ENCODE measurements at regions of chr17 and their contacts with region 1.

Region 1: GRCh38 chr17:75182569-75183450 is at the start of gene SUMO2:
- DNase-seq: peak; percentile 90 to 97 (median 94)
- ATAC-seq: peak; percentile 92
- H3K4me3 ChIP-seq: peak within 1 kb of the TSS; percentile 56
- H3K4me3 Mint-ChIP-seq: peak within 1 kb of the TSS; percentile 87 to 100 (median 92)
- H3K27ac ChIP-seq: peak within 1 kb of the TSS; percentile 94
- H3K27ac Mint-ChIP-seq: peak within 1 kb of the TSS; percentile 92 to 99 (median 97)
- H3K4me1 ChIP-seq: peaks cover 22 to 26% of the 10 kb centered on the region in 2 donors
- H3K4me1 Mint-ChIP-seq: peaks cover 20 to 55% (median 38%) of the 10 kb centered on the region in 7 donors
- H3K27me3 ChIP-seq: no peaks in the 10 kb centered on the region
- H3K27me3 Mint-ChIP-seq: no peaks in the 10 kb centered on the region
- total RNA-seq, gene SUMO2: 201 to 494 (median 247) TPM

Region 2: GRCh38 chr17:75046582-75047289 is 136.1 kb before region 1 on chr17 and contains the starts of genes ATP5PD and KCTD2:
- CTCF ChIA-PET with region 1: no interaction called
- POLR2A ChIA-PET with region 1: interaction called, 6 read pairs
- intact Hi-C with region 1: loop called in 1 of 2 experiments (anchors 5 kb)
- DNase-seq: peak; percentile 82 to 93 (median 91)
- ATAC-seq: peak; percentile 98
- H3K4me3 ChIP-seq: peak within 1 kb of the TSS; percentile 77
- H3K4me3 Mint-ChIP-seq: peak within 1 kb of the TSS; percentile 95 to 99 (median 98)
- H3K27ac ChIP-seq: peak within 1 kb of the TSS; percentile 93
- H3K27ac Mint-ChIP-seq: peak within 1 kb of the TSS; percentile 92 to 99 (median 96)
- H3K4me1 ChIP-seq: peaks cover 13 to 16% of the 10 kb centered on the region in 2 donors
- H3K4me1 Mint-ChIP-seq: peaks cover 30 to 62% (median 49%) of the 10 kb centered on the region in 7 donors
- H3K27me3 ChIP-seq: no peaks in the 10 kb centered on the region
- H3K27me3 Mint-ChIP-seq: no peaks in the 10 kb centered on the region
- total RNA-seq, gene ATP5PD: 113 to 195 (median 161) TPM
- total RNA-seq, gene KCTD2: 19.5 to 35.7 (median 23.0) TPM

Region 3: DNA sequence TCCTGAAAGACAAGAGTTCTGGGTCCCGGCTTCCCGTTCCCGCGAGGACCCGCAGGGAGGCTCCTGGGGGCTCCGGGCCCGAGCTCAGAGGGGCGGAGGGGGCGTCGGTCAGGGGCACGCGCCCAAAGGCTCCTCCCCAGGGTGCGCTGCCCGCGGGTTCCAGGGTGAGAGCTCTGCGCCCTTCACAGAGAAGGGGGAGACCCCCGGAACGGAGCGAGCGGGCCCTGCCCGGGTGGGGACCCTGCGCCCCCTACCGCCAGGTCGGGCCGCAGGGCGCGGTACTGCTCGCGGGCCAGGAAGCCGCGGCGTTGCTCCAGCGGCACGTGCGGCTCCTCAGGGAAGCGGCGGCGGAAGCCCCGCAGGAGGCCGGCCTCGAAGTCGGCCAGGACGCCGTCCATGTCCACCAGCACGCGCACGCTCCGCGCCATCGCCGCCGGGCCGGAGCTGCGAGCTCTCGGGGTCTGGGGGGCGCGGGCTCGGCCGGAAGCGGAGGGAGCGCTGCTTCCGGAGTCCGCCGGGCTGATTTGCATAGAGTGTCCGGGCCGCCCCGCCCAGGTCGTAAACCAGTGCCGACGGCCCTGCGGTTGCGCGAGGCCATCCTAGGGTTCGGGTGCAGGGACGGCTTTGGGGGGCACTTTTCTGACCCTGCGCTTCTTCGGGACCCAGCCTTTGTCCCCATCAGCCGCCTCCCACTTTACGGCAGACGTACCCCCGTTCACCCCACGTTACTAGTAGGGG is 51.4 kb before region 1 on chr17 and contains the start of gene NT5C:
- CTCF ChIA-PET with region 1: interaction called, 4 read pairs
- POLR2A ChIA-PET with region 1: interaction called, 6 read pairs
- intact Hi-C with region 1: loop called (anchors 2 to 5 kb)
- DNase-seq: peak; percentile 32 to 82 (median 50)
- ATAC-seq: peak; percentile 85
- H3K4me3 ChIP-seq: peak within 1 kb of the TSS; percentile 71
- H3K4me3 Mint-ChIP-seq: peak within 1 kb of the TSS; percentile 79 to 93 (median 88)
- H3K27ac ChIP-seq: peak within 1 kb of the TSS; percentile 84
- H3K27ac Mint-ChIP-seq: peak within 1 kb of the TSS; percentile 76 to 93 (median 88)
- H3K4me1 ChIP-seq: peaks cover 5 to 7% of the 10 kb centered on the region in 2 donors
- H3K4me1 Mint-ChIP-seq: peaks cover 7 to 23% (median 10%) of the 10 kb centered on the region in 7 donors
- H3K27me3 ChIP-seq: no peaks in the 10 kb centered on the region
- H3K27me3 Mint-ChIP-seq: no peaks in the 10 kb centered on the region
- total RNA-seq, gene NT5C: 23.4 to 54.8 (median 37.5) TPM

Region 4: DNA sequence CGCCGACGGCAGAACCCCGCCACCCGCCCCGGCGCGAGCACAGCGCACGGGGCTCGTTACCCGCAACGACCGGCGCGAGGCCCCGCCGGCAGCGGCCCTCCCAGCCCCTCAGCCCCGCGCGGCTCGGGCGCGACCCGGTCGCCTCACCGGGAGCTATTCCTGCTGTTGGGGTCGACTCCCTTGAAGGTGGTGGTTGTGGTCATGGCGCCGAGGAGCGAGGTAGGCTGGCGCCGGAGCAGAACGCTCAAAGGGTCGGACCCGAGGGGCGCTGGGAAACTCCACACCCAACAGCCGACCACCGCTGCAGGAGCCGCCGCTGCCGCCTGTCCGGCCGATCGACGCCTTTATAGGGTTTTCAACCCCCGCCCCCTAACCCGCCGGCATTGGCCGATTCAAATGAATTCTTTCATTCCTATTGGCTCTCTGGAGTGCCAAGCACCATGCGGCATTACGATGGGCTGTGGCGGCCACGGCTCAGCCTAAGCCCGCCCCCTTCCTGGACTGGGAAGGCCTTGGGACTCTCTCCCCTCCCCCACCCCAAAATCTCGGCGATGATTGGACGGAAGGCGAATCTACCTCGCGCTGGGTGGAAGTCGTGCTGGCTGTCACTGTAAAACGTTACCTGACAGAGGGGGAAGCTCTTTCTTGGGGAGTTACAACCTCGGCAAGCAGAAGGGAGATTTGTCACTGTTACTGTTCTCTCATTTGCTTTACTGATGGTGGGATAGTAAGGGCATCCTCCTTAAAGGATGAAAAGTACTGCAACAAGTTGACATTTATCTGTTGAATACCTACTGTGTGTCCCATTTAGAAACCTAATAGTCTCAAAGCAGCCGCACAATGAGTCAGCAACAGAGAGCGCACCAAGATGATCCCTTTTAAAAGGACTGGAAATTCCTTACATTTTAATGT is 28.4 kb before region 1 on chr17 and contains the start of gene JPT1:
- CTCF ChIA-PET with region 1: interaction called, 3 read pairs
- POLR2A ChIA-PET with region 1: interaction called, 3 read pairs
- intact Hi-C with region 1: loop called (anchors 1 kb)
- DNase-seq: peak; percentile 82 to 98 (median 96)
- ATAC-seq: peak; percentile 100
- H3K4me3 ChIP-seq: peak within 1 kb of the TSS; percentile 84
- H3K4me3 Mint-ChIP-seq: peak within 1 kb of the TSS; percentile 88 to 98 (median 94)
- H3K27ac ChIP-seq: peak within 1 kb of the TSS; percentile 80
- H3K27ac Mint-ChIP-seq: peak within 1 kb of the TSS; percentile 78 to 96 (median 92)
- H3K4me1 ChIP-seq: peaks cover 0 to 18% of the 10 kb centered on the region in 2 donors
- H3K4me1 Mint-ChIP-seq: peaks cover 11 to 39% (median 36%) of the 10 kb centered on the region in 7 donors
- H3K27me3 ChIP-seq: no peaks in the 10 kb centered on the region
- H3K27me3 Mint-ChIP-seq: no peaks in the 10 kb centered on the region
- total RNA-seq, gene JPT1: 12.3 to 227 (median 29.3) TPM

Region 5: DNA sequence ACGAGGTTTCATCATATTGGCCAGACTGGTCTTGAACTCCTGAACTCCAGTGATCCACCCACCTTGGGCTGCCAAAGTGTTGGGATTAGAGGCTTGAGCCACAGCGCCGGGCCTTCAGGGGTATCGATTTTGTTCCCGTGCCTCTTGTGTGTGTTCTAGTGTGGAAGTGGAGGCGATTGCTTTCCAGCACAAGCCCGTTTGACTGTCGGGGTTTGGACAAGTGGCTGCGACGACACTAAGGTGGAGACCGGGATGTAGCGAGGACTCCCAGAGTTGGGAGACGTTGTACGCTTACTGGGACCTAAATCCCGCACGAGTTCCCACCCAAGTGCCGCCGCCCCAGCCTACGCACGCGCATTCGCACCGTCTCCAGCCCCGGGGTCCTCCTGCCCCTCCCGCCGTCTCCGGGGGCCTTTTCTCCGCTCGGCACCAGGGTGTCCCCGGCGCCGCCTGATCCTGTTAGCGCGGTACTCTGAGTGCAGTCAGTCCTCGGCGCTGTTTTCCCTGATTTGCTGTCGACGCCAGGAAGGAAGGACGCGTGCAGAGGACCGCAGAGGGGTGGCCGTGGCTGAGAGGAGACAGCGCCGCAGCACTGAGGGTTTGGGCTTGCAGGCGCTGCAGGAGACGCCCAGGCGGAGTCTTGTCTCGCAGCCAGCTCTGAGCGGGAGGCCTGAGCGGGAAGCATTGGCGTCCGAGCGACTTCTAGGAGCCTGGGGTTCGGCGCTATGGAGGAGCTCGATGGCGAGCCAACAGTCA is 22.4 kb after region 1 on chr17 and contains the start of gene NUP85:
- CTCF ChIA-PET with region 1: interaction called, 6 read pairs
- POLR2A ChIA-PET with region 1: interaction called, 14 read pairs
- intact Hi-C with region 1: loop called (anchors 1 kb)
- DNase-seq: peak; percentile 87 to 97 (median 93)
- ATAC-seq: peak; percentile 96
- H3K4me3 ChIP-seq: peak within 1 kb of the TSS; percentile 82
- H3K4me3 Mint-ChIP-seq: peak within 1 kb of the TSS; percentile 91 to 98 (median 96)
- H3K27ac ChIP-seq: peak within 1 kb of the TSS; percentile 95
- H3K27ac Mint-ChIP-seq: peak within 1 kb of the TSS; percentile 94 to 100 (median 99)
- H3K4me1 ChIP-seq: peaks cover 0 to 5% of the 10 kb centered on the region in 2 donors
- H3K4me1 Mint-ChIP-seq: peaks cover 12 to 47% (median 26%) of the 10 kb centered on the region in 7 donors
- H3K27me3 ChIP-seq: no peaks in the 10 kb centered on the region
- H3K27me3 Mint-ChIP-seq: no peaks in the 10 kb centered on the region
- total RNA-seq, gene NUP85: 96.3 to 143 (median 99.2) TPM

Region 6: DNA sequence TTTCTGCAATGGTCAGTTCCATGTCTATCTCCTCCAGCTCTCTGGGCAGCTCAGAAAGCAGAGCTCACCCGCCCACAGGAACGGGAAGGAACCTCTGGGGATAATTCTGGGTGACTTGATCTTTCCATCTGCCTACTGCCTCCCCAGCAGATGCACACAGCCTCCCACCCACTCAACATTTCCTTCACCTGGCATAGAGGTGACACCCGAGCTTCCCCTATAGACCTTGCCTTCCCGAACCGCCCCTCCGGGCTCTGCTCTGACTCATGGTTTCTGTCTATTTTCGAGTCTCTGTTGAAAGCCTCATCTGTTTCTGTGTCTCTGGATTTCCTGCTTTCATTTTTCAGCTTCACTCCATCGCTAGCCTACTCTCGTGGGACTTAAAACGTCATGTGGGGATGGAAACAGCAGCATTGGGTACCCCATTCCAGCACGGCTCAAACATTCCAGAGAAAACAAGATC is 67.2 kb after region 1 on chr17:
- CTCF ChIA-PET with region 1: no interaction called
- POLR2A ChIA-PET with region 1: interaction called, 3 read pairs
- intact Hi-C with region 1: loop called in 1 of 2 experiments (anchors 1 kb)
- DNase-seq: peak in 6 of 9 donors; percentile 30 to 80 (median 36)
- ATAC-seq: peak; percentile 85
- H3K4me3 ChIP-seq: peak overlapping the region; percentile 40
- H3K4me3 Mint-ChIP-seq: peak overlapping the region; percentile 57 to 89 (median 72)
- H3K27ac ChIP-seq: peak overlapping the region; percentile 64
- H3K27ac Mint-ChIP-seq: peak overlapping the region; percentile 81 to 99 (median 90)
- H3K4me1 ChIP-seq: peaks cover 9 to 15% of the 10 kb centered on the region in 2 donors
- H3K4me1 Mint-ChIP-seq: peaks cover 35 to 57% (median 52%) of the 10 kb centered on the region in 7 donors
- H3K27me3 ChIP-seq: no peaks in the 10 kb centered on the region
- H3K27me3 Mint-ChIP-seq: no peaks in the 10 kb centered on the region

Region 7: DNA sequence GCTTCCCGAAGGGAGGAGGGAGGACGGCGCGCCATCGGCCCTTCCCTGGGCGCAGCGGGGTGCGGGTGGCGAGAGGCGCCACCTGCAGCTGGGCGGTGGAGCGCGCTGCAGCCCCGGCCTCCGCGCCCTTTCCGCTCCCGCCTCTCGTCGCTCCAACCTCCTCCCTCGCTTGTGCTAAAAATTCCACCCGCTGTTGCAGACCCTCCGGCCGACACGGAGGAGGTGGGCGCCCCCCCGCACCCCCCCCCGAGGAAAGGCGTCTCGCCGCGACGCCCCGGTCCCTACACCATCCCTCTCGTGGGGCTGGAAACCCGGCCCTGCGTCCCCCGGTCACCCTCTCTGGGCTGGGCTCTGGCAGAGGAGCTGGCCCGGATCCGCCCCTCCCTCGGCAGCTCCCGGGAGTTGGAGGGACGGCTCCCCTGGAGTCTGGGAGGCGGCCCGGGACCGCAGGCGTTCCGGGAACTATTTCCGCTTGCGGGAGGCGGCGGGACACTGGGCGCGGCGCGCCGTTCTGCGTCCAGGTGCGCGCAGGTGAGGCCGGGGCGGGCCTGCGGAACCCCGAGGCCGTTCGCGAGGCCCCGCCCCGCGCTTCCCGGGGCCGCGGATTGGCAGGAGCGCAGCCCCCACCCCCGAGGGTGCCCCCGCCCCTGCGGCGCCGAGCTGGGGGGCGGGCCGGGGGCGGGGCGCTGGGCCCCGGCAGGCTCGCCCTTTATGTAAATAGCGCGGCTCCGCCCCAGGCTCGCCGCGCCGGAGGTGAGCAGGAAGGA is 342.3 kb after region 1 on chr17 and contains the start of gene LLGL2:
- CTCF ChIA-PET with region 1: no interaction called
- POLR2A ChIA-PET with region 1: no interaction called
- intact Hi-C with region 1: loop called in 1 of 2 experiments (anchors 2 kb)
- DNase-seq: peak; percentile 82 to 91 (median 89)
- ATAC-seq: peak; percentile 98
- H3K4me3 ChIP-seq: peak within 1 kb of the TSS; percentile 75
- H3K4me3 Mint-ChIP-seq: peak within 1 kb of the TSS; percentile 76 to 86 (median 82)
- H3K27ac ChIP-seq: peak within 1 kb of the TSS; percentile 67
- H3K27ac Mint-ChIP-seq: peak within 1 kb of the TSS in 7 of 9 donors; percentile 45 to 74 (median 59)
- H3K4me1 ChIP-seq: peaks cover 6 to 7% of the 10 kb centered on the region in 2 donors
- H3K4me1 Mint-ChIP-seq: peaks cover 0 to 20% (median 16%) of the 10 kb centered on the region in 7 donors
- H3K27me3 ChIP-seq: no peaks in the 10 kb centered on the region
- H3K27me3 Mint-ChIP-seq: peaks cover 0 to 11% (median 0%) of the 10 kb centered on the region in 5 donors
- total RNA-seq, gene LLGL2: 22.4 to 55.7 (median 33.7) TPM

Measured in naive thymus-derived CD4-positive, alpha-beta T cell (primary cell).